CD4-positive, alpha-beta T cell (primary cell): ENCODE measurements at regions of chr15 and their contacts with region 1.

Region 1: GRCh38 chr15:68304589-68305337 is 27.2 kb downstream of the FEM1B start:
- DNase-seq: no peak
- ATAC-seq: no peak
- H3K4me3 ChIP-seq: no peak overlapping the region
- H3K4me3 Mint-ChIP-seq: no peak overlapping the region
- H3K27ac ChIP-seq: no peak overlapping the region
- H3K27ac Mint-ChIP-seq: no peak overlapping the region
- H3K4me1 ChIP-seq: peaks cover 8% of the 10 kb centered on the region
- H3K4me1 Mint-ChIP-seq: peaks cover 35% of the 10 kb centered on the region
- H3K27me3 ChIP-seq: peaks cover 0 to 4% of the 10 kb centered on the region in 2 experiments
- H3K27me3 Mint-ChIP-seq: no peaks in the 10 kb centered on the region
- CTCF ChIP-seq: no peak

Region 2: GRCh38 chr15:68229386-68230156 is 75.2 kb before region 1 on chr15 and contains the start of gene CLN6:
- CTCF ChIA-PET with region 1: interaction called, 10 read pairs
- POLR2A ChIA-PET with region 1: no interaction called
- intact Hi-C with region 1: no loop called
- DNase-seq: peak; percentile 57 to 93 (median 75)
- ATAC-seq: peak; percentile 82
- H3K4me3 ChIP-seq: peak within 1 kb of the TSS; percentile 88
- H3K4me3 Mint-ChIP-seq: peak within 1 kb of the TSS; percentile 92
- H3K27ac ChIP-seq: peak within 1 kb of the TSS in 1 of 2 donors; percentile 34
- H3K27ac Mint-ChIP-seq: peak within 1 kb of the TSS; percentile 73
- H3K4me1 ChIP-seq: peaks cover 29% of the 10 kb centered on the region
- H3K4me1 Mint-ChIP-seq: peaks cover 28% of the 10 kb centered on the region
- H3K27me3 ChIP-seq: no peaks in the 10 kb centered on the region
- H3K27me3 Mint-ChIP-seq: no peaks in the 10 kb centered on the region
- CTCF ChIP-seq: no peak
- total RNA-seq, gene CLN6: 8.0 to 8.1 TPM

Region 3: GRCh38 chr15:68319997-68320396 is 15.2 kb after region 1 on chr15:
- CTCF ChIA-PET with region 1: interaction called, 5 read pairs
- POLR2A ChIA-PET with region 1: interaction called, 6 read pairs
- intact Hi-C with region 1: loop called in 1 of 2 experiments (anchors 2 kb)
- DNase-seq: no peak
- ATAC-seq: no peak
- H3K4me3 ChIP-seq: no peak overlapping the region
- H3K4me3 Mint-ChIP-seq: no peak overlapping the region
- H3K27ac ChIP-seq: no peak overlapping the region
- H3K27ac Mint-ChIP-seq: no peak overlapping the region
- H3K4me1 ChIP-seq: no peaks in the 10 kb centered on the region
- H3K4me1 Mint-ChIP-seq: peaks cover 19% of the 10 kb centered on the region
- H3K27me3 ChIP-seq: no peaks in the 10 kb centered on the region
- H3K27me3 Mint-ChIP-seq: no peaks in the 10 kb centered on the region
- CTCF ChIP-seq: no peak

Region 4: DNA sequence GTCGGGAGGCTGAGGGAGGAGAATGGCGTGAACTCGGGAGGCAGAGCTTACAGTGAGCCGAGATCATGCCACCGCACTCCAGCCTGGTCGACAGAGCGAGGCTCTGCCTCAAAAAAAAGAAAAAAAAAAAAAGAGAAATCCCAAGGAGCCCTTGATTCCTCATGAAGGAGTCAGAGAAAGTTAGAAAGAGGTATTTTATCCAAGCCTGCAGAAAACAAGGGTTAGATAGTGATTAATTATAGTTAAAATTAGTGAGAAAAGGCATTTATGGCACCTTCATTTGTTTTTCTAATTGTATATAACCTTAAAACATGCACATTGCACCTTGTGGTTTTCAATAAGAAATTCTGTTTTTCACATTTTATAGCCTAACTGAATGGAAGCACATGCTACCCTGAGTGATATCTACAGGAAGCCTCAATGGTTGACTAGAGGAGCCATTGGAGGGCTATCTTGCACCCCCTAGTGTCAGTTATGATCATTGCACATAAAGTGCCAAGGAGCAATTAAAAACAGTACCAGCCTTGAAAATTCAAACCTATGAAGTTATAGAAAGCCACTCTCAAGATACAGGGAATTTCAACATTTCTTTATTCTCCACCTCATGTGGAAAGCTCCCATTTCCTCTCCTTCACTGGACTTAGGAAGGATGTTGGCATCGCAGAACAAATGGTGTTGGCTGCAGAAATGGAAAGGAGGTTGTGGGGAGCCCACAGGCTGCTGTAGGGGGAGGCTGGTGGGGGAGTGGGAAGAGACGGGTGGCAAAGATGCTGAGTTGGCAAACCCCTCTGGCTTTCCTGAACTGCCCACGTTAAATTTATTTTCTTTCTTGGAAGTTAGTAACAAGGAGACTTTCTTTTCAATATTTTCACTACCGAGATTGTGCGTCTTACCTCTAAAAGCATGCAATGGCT is 78.7 kb after region 1 on chr15:
- CTCF ChIA-PET with region 1: no interaction called
- POLR2A ChIA-PET with region 1: no interaction called
- intact Hi-C with region 1: loop called (anchors 1 kb)
- DNase-seq: peak in 11 of 14 experiments; percentile 6 to 73 (median 27)
- ATAC-seq: peak; percentile 83
- H3K4me3 ChIP-seq: no peak overlapping the region
- H3K4me3 Mint-ChIP-seq: no peak overlapping the region
- H3K27ac ChIP-seq: no peak overlapping the region
- H3K27ac Mint-ChIP-seq: no peak overlapping the region
- H3K4me1 ChIP-seq: peaks cover 13% of the 10 kb centered on the region
- H3K4me1 Mint-ChIP-seq: peaks cover 21% of the 10 kb centered on the region
- H3K27me3 ChIP-seq: peaks cover 0 to 9% of the 10 kb centered on the region in 2 experiments
- H3K27me3 Mint-ChIP-seq: peaks cover 3% of the 10 kb centered on the region
- CTCF ChIP-seq: peak; percentile 70

Region 5: DNA sequence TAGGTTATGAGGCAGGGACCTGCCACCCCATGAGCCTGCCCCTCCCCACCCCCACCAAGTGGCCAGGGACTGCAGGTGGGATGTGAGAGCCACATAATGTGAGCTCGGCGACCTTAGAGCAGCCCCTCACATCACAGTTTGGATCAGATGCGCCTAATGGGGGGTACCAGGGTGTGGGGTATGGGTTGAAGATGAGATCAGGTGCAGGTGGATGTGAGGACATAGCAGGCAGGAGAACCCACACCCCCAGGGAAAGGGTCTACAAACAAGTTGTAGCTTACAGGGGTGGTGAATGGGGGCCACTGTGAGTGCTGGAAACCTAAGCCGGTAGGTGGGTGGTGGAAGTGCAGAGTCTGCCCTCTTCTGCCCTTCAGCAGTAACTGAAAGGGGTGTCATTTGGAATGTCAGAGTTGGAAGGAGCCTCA is 368.0 kb after region 1 on chr15:
- CTCF ChIA-PET with region 1: interaction called, 4 read pairs
- POLR2A ChIA-PET with region 1: no interaction called
- intact Hi-C with region 1: loop called in 1 of 2 experiments (anchors 1 kb)
- DNase-seq: no peak
- ATAC-seq: no peak
- H3K4me3 ChIP-seq: no peak overlapping the region
- H3K4me3 Mint-ChIP-seq: no peak overlapping the region
- H3K27ac ChIP-seq: no peak overlapping the region
- H3K27ac Mint-ChIP-seq: no peak overlapping the region
- H3K4me1 ChIP-seq: peaks cover 2% of the 10 kb centered on the region
- H3K4me1 Mint-ChIP-seq: no peaks in the 10 kb centered on the region
- H3K27me3 ChIP-seq: peaks cover 0 to 13% of the 10 kb centered on the region in 2 experiments
- H3K27me3 Mint-ChIP-seq: peaks cover 16% of the 10 kb centered on the region
- CTCF ChIP-seq: no peak